ENCODE measurements at regions of chr5 and their contacts with region 1.

Region 1: GRCh38 chr5:137735555-137736284 is at the start of gene KLHL3:
- DNase-seq: peak; percentile 23

Region 2: GRCh38 chr5:137660349-137660817 is 75.3 kb before region 1 on chr5:
- CTCF ChIA-PET with region 1: interaction called, 32 read pairs
- POLR2A ChIA-PET with region 1: no interaction called
- DNase-seq: peak; percentile 70